GM12878 (cell line): ENCODE measurements at regions of chr7 and their contacts with region 1.

Region 1: DNA sequence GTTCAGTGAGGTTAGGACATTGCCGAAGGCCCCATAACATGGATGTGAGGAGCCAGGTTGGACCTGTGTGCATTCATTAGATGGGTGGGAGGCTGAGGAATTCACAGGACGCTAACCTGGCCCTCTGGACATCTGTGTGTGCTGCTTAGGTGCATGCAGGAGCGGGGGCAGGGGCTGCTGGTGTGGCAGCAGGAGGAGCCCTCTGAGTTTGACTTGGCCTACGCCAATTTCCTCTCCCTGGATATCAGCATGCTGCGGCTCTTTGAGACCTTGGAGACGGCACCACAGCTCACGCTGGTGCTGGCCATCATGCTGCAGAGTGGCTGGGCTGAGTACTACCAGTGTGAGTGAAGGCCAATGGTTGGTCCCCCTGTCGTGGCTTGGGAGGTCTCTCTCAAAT is 34.5 kb upstream of the MMD2 start:
- DNase-seq: no peak
- ATAC-seq: no peak
- H3K4me3 ChIP-seq: no peak overlapping the region
- H3K27ac ChIP-seq: no peak overlapping the region
- H3K4me1 ChIP-seq: peaks cover 4% of the 10 kb centered on the region
- H3K27me3 ChIP-seq: no peaks in the 10 kb centered on the region
- CTCF ChIP-seq: no peak
- EP300 ChIP-seq: no peak
- POLR2A ChIP-seq: no peak
- RAD21 ChIP-seq: no peak

Region 2: GRCh38 chr7:4733936-4734528 is 259.4 kb before region 1 on chr7:
- CTCF ChIA-PET with region 1: no interaction called
- POLR2A ChIA-PET with region 1: no interaction called
- RAD21 ChIA-PET with region 1: no interaction called
- SMC1A ChIA-PET with region 1: no interaction called
- in situ Hi-C with region 1: no loop called
- intact Hi-C with region 1: no loop called
- DNase-seq: no peak
- ATAC-seq: no peak
- H3K4me3 ChIP-seq: no peak overlapping the region
- H3K27ac ChIP-seq: no peak overlapping the region
- H3K4me1 ChIP-seq: no peaks in the 10 kb centered on the region
- H3K27me3 ChIP-seq: no peaks in the 10 kb centered on the region
- CTCF ChIP-seq: no peak
- EP300 ChIP-seq: no peak
- POLR2A ChIP-seq: no peak
- RAD21 ChIP-seq: no peak

Region 3: GRCh38 chr7:4744391-4745264 is 248.8 kb before region 1 on chr7:
- CTCF ChIA-PET with region 1: no interaction called
- POLR2A ChIA-PET with region 1: no interaction called
- RAD21 ChIA-PET with region 1: no interaction called
- SMC1A ChIA-PET with region 1: no interaction called
- in situ Hi-C with region 1: no loop called
- intact Hi-C with region 1: no loop called
- DNase-seq: peak; percentile 58
- ATAC-seq: peak; percentile 95
- H3K4me3 ChIP-seq: peak overlapping the region; percentile 69; the same call in 1 of the 2 replicates
- H3K27ac ChIP-seq: peak overlapping the region; percentile 90
- H3K4me1 ChIP-seq: peaks cover 29% of the 10 kb centered on the region
- H3K27me3 ChIP-seq: no peaks in the 10 kb centered on the region
- CTCF ChIP-seq: no peak
- EP300 ChIP-seq: no peak
- POLR2A ChIP-seq: peak; percentile 71
- RAD21 ChIP-seq: no peak

Region 4: GRCh38 chr7:5743803-5744202 is 750.3 kb after region 1 on chr7:
- CTCF ChIA-PET with region 1: no interaction called
- POLR2A ChIA-PET with region 1: no interaction called
- RAD21 ChIA-PET with region 1: no interaction called
- SMC1A ChIA-PET with region 1: no interaction called
- in situ Hi-C with region 1: no loop called
- intact Hi-C with region 1: loop called (anchors 10 kb)
- DNase-seq: no peak
- ATAC-seq: no peak
- H3K4me3 ChIP-seq: no peak overlapping the region
- H3K27ac ChIP-seq: no peak overlapping the region
- H3K4me1 ChIP-seq: no peaks in the 10 kb centered on the region
- H3K27me3 ChIP-seq: no peaks in the 10 kb centered on the region
- CTCF ChIP-seq: no peak
- EP300 ChIP-seq: no peak
- POLR2A ChIP-seq: no peak
- RAD21 ChIP-seq: no peak